ENCODE measurements at regions of chr16 and their contacts with region 1.

Region 1: DNA sequence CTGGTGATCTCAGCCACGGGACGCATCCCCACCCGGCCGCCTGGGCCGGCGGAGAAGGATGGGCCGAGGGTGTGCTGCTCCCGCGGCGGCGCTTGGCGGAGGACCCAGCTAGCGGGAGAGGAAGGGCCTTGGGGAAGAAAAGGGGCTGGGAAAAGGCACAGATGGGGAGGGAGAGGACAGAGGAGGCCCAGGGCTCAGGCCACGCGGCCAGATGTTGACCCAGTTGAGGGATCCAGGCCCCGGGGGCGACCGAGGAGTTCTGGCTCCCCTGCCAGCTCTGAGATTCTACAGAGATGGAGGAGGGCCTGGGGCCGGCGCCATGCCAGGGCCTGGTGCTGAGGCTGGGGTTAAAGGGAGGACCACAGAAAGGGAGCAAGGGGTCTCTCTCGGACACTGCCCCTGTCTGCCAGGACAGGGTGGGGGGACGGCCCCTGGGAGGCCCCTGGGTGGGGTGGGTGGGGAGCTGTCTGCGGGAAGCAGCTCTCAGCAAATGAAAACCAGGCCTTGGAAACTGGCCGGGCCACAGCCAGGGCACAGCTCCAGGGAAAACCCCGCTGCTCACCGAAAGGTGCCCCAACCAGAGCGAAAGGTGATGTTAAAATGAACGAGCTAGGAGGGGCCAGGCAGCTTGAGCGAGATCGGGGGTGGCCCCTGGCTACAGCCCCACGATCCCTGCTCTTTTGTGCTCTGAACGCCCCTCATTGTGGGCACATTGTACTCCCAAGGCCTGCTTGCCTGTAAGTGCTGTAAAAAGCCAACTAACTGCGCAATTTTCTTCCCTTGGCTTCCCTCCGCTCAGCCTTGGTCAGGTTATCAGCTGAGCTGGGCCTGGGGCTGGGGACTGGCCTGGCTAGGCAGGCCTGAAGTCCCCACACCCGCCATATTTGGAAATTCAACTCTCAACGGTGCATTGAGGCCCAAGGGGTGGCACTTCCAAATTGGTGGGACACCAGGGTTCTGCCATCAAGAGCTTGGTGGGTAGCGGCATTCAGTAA is 191.4 kb downstream of the ZNF423 start:
- DNase-seq: no peak

Region 2: DNA sequence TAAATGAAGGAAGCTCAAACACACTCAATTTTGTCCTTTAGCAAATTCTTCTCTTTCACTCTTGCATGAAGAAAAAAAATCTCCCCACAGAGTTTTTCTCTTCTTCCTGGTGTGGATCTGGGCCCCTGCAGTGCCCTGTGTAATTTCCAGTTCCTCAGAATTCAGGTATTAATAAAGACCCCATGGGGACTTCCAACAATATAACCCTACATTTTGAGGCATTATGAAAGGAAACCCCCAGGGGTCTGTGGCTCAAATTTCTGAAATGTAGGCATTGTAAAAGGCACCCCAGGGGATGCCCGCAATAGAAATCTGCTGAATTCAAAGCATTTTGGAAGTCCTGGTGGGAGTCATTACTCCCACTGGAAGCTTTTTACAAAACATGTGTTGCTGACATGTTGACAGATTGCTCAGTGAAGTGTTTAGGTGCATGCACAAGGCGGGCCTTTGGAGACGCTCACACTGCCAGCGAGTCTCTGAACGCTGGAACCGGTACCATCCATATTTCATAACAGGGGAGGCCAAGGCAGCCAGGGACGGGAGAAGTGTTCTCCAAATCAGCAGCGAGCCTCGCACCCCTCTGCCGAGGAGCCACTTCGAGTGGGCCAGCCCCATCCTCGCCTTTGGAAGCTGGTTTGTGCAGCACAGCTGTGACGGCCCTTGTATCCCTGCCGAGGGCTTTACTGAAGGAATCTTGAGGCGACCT is 37.4 kb after region 1 on chr16:
- intact Hi-C with region 1: loop called in 1 of 2 experiments (anchors 1 kb)
- DNase-seq: peak; percentile 91